ENCODE measurements at regions of chr12 and their contacts with region 1.

Region 1: GRCh38 chr12:113422030-113422885 is at the start of gene SDSL:
- DNase-seq: peak; percentile 80
- H3K4me3 ChIP-seq: peak within 1 kb of the TSS; percentile 22 to 51 (median 43)
- H3K27ac ChIP-seq: peak within 1 kb of the TSS; percentile 35 to 68 (median 50)
- H3K4me1 ChIP-seq: peaks cover 0 to 15% (median 8%) of the 10 kb centered on the region in 4 donors
- H3K27me3 ChIP-seq: peaks cover 0 to 15% (median 0%) of the 10 kb centered on the region in 3 donors
- CTCF ChIP-seq: no peak
- EP300 ChIP-seq: peak in 1 of 4 donors; percentile 7
- POLR2A ChIP-seq: no peak
- total RNA-seq, gene SDSL: 0.82 to 1.9 (median 0.95) TPM

Region 2: GRCh38 chr12:113196996-113197395 is 225.3 kb before region 1 on chr12:
- intact Hi-C with region 1: loop called (anchors 10 kb)
- DNase-seq: peak; percentile 84
- H3K4me3 ChIP-seq: no peak overlapping the region
- H3K27ac ChIP-seq: no peak overlapping the region
- H3K4me1 ChIP-seq: peaks cover 0 to 14% (median 10%) of the 10 kb centered on the region in 4 donors
- H3K27me3 ChIP-seq: no peaks in the 10 kb centered on the region
- CTCF ChIP-seq: peak in 2 of 4 experiments; percentile 26 to 45
- EP300 ChIP-seq: no peak
- POLR2A ChIP-seq: no peak

Measured in sigmoid colon (tissue), 7 donors.